ENCODE measurements at regions of chr5 and their contacts with region 1.

Region 1: GRCh38 chr5:112976432-112977309 is at the start of gene DCP2:
- DNase-seq: peak; percentile 91 to 98 (median 95)
- ATAC-seq: peak; percentile 95 to 97 (median 96)
- H3K4me3 ChIP-seq: peak within 1 kb of the TSS; percentile 94 to 99
- H3K4me3 Mint-ChIP-seq: peak within 1 kb of the TSS; percentile 95 to 99 (median 97)
- H3K27ac ChIP-seq: peak within 1 kb of the TSS; percentile 78
- H3K27ac Mint-ChIP-seq: peak within 1 kb of the TSS; percentile 96 to 97
- H3K4me1 ChIP-seq: peaks cover 16 to 25% of the 10 kb centered on the region in 2 experiments
- H3K4me1 Mint-ChIP-seq: peaks cover 45 to 56% (median 50%) of the 10 kb centered on the region in 3 donors
- H3K27me3 ChIP-seq: no peaks in the 10 kb centered on the region
- H3K27me3 Mint-ChIP-seq: no peaks in the 10 kb centered on the region
- total RNA-seq, gene DCP2: 68.6 to 88.5 (median 71.9) TPM

Region 2: GRCh38 chr5:112833971-112834370 is 142.7 kb before region 1 on chr5:
- CTCF ChIA-PET with region 1: no interaction called
- POLR2A ChIA-PET with region 1: interaction called in 1 of 2 experiments, 13 read pairs
- DNase-seq: no peak
- ATAC-seq: no peak
- H3K4me3 ChIP-seq: no peak overlapping the region
- H3K4me3 Mint-ChIP-seq: no peak overlapping the region
- H3K27ac ChIP-seq: no peak overlapping the region
- H3K27ac Mint-ChIP-seq: no peak overlapping the region
- H3K4me1 ChIP-seq: no peaks in the 10 kb centered on the region
- H3K4me1 Mint-ChIP-seq: no peaks in the 10 kb centered on the region
- H3K27me3 ChIP-seq: no peaks in the 10 kb centered on the region
- H3K27me3 Mint-ChIP-seq: no peaks in the 10 kb centered on the region

Region 3: GRCh38 chr5:112869948-112870347 is 106.7 kb before region 1 on chr5:
- CTCF ChIA-PET with region 1: interaction called, 3 to 4 read pairs
- POLR2A ChIA-PET with region 1: interaction called in 1 of 2 experiments, 12 read pairs
- DNase-seq: peak in 1 of 35 experiments; percentile 21
- ATAC-seq: peak in 3 of 4 experiments; percentile 60 to 81 (median 77)
- H3K4me3 ChIP-seq: no peak overlapping the region
- H3K4me3 Mint-ChIP-seq: no peak overlapping the region
- H3K27ac ChIP-seq: no peak overlapping the region
- H3K27ac Mint-ChIP-seq: peak overlapping the region; percentile 64 to 89
- H3K4me1 ChIP-seq: peaks cover 5 to 12% of the 10 kb centered on the region in 2 experiments
- H3K4me1 Mint-ChIP-seq: peaks cover 25 to 55% (median 53%) of the 10 kb centered on the region in 3 donors
- H3K27me3 ChIP-seq: no peaks in the 10 kb centered on the region
- H3K27me3 Mint-ChIP-seq: no peaks in the 10 kb centered on the region

Region 4: GRCh38 chr5:112921833-112922817 is 54.5 kb before region 1 on chr5 and contains the start of gene REEP5:
- CTCF ChIA-PET with region 1: interaction called in 1 of 2 experiments, 12 read pairs
- POLR2A ChIA-PET with region 1: interaction called in 1 of 2 experiments, 3 read pairs
- DNase-seq: peak; percentile 65 to 94 (median 79)
- ATAC-seq: peak; percentile 83 to 91 (median 88)
- H3K4me3 ChIP-seq: peak within 1 kb of the TSS; percentile 89 to 97
- H3K4me3 Mint-ChIP-seq: peak within 1 kb of the TSS; percentile 78 to 94 (median 90)
- H3K27ac ChIP-seq: peak within 1 kb of the TSS; percentile 77
- H3K27ac Mint-ChIP-seq: peak within 1 kb of the TSS; percentile 94 to 95
- H3K4me1 ChIP-seq: peaks cover 17 to 52% of the 10 kb centered on the region in 2 experiments
- H3K4me1 Mint-ChIP-seq: peaks cover 58 to 70% (median 64%) of the 10 kb centered on the region in 3 donors
- H3K27me3 ChIP-seq: no peaks in the 10 kb centered on the region
- H3K27me3 Mint-ChIP-seq: no peaks in the 10 kb centered on the region
- total RNA-seq, gene REEP5: 23.0 to 71.1 (median 53.2) TPM

Region 5: DNA sequence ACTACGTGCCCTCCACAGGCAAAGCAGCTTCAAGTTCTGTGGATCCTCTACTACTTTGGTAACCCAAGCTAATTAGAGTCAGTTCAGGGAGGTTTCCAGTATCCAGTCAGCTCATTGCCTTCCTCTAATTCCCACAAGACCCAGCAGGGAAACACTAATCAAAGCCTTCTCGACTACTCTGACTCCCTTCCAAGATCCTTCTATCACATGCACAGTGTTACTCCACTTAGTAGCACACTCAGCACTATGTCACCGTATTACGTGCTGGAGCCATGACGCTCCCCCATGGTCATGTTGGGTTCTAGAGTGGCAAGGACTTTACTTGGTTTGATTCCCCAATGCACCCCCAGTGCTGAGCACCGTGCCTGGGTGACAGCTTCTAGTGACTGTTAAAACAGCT is 52.9 kb after region 1 on chr5:
- CTCF ChIA-PET with region 1: no interaction called
- POLR2A ChIA-PET with region 1: no interaction called
- DNase-seq: no peak
- ATAC-seq: no peak
- H3K4me3 ChIP-seq: no peak overlapping the region
- H3K4me3 Mint-ChIP-seq: no peak overlapping the region
- H3K27ac ChIP-seq: no peak overlapping the region
- H3K27ac Mint-ChIP-seq: no peak overlapping the region
- H3K4me1 ChIP-seq: peaks cover 0 to 7% of the 10 kb centered on the region in 2 experiments
- H3K4me1 Mint-ChIP-seq: peaks cover 4 to 16% (median 9%) of the 10 kb centered on the region in 3 donors
- H3K27me3 ChIP-seq: no peaks in the 10 kb centered on the region
- H3K27me3 Mint-ChIP-seq: no peaks in the 10 kb centered on the region